Right cardiac atrium (tissue), 5 donors: ENCODE measurements at regions of chr7 and their contacts with region 1.

Region 1: GRCh38 chr7:28955718-28956619 is 2.2 kb downstream of the TRIL start:
- DNase-seq: peak; percentile 79 to 93 (median 91)
- ATAC-seq: peak; percentile 63 to 68
- H3K4me3 ChIP-seq: peak overlapping the region; percentile 30
- H3K27ac ChIP-seq: no peak overlapping the region
- H3K4me1 ChIP-seq: peaks cover 6% of the 10 kb centered on the region
- H3K27me3 ChIP-seq: no peaks in the 10 kb centered on the region

Region 2: DNA sequence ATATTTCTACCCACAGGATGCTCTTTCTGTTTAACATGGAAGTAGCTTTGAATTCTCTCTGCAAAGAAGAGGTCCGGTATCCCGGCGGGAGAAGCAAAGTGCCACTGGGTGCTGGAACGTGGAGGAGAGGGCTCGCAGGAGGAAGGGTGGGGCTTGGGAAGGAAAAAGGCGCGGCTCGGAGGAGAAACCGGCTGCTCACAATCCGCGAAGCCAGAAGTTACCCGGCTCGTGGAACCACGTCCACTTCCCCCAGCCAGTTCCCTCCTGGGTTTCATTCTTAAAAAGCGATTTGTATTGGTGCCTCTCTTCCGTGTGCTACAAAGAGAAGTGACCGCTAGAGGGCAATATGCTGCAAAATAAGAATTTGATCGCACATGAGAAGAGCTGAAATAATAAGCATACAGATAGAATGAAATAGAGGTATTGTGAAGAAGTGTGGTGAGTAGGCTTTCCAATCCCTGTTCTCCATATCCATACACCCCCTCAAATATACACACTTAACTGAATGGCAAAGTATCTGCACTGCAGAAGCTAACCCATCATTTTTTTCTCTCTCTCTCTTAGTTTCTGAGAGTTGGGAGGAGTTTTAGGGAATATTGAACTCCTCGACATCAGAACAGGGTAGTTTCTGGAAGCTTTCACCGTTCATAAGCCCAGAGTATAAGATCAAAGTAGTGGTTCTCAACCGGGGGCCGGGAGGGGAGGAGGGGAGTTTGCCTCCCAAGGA is 28.9 kb before region 1 on chr7:
- intact Hi-C with region 1: loop called in 1 of 4 experiments (anchors 2 kb)
- DNase-seq: peak; percentile 80 to 88 (median 83)
- ATAC-seq: peak; percentile 92 to 97
- H3K4me3 ChIP-seq: peak overlapping the region; percentile 66
- H3K27ac ChIP-seq: no peak overlapping the region
- H3K4me1 ChIP-seq: no peaks in the 10 kb centered on the region
- H3K27me3 ChIP-seq: no peaks in the 10 kb centered on the region

Region 3: DNA sequence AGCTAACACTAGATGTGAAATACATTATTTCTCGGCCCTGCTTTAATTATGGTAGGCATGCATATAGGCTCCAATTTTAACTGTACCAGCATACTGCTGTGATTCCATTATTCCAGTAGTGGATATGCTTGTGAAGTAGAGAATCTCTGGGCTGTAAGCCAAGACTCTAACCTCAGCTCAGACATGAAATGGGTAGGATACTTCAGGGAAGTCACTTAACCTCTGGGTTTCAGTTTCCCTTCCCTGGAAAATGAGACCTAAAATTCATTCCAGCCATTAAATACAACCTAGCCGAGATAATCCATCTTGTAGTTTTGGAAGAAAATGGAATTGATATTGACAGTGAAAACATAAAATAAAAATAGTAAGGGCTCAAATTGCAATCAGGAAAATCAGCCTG is 61.7 kb after region 1 on chr7:
- intact Hi-C with region 1: loop called in 2 of 4 experiments (anchors 5 to 10 kb)
- DNase-seq: no peak
- ATAC-seq: no peak
- H3K4me3 ChIP-seq: no peak overlapping the region
- H3K27ac ChIP-seq: no peak overlapping the region
- H3K4me1 ChIP-seq: peaks cover 2% of the 10 kb centered on the region
- H3K27me3 ChIP-seq: no peaks in the 10 kb centered on the region

Region 4: GRCh38 chr7:29105752-29106668 is 150.0 kb after region 1 on chr7:
- intact Hi-C with region 1: loop called in 2 of 4 experiments (anchors 10 kb)
- DNase-seq: peak in 1 of 3 donors; percentile 21
- ATAC-seq: peak; percentile 76 to 78
- H3K4me3 ChIP-seq: no peak overlapping the region
- H3K27ac ChIP-seq: no peak overlapping the region
- H3K4me1 ChIP-seq: no peaks in the 10 kb centered on the region
- H3K27me3 ChIP-seq: no peaks in the 10 kb centered on the region